AG04450 (cell line): ENCODE measurements at regions of chr9 and their contacts with region 1.

Region 1: GRCh38 chr9:7055201-7055903 is 297.6 kb downstream of the KDM4C start:
- DNase-seq: no peak
- H3K4me3 ChIP-seq: no peak overlapping the region
- H3K27ac ChIP-seq: no peak overlapping the region
- H3K27me3 ChIP-seq: no peaks in the 10 kb centered on the region
- CTCF ChIP-seq: no peak

Region 2: DNA sequence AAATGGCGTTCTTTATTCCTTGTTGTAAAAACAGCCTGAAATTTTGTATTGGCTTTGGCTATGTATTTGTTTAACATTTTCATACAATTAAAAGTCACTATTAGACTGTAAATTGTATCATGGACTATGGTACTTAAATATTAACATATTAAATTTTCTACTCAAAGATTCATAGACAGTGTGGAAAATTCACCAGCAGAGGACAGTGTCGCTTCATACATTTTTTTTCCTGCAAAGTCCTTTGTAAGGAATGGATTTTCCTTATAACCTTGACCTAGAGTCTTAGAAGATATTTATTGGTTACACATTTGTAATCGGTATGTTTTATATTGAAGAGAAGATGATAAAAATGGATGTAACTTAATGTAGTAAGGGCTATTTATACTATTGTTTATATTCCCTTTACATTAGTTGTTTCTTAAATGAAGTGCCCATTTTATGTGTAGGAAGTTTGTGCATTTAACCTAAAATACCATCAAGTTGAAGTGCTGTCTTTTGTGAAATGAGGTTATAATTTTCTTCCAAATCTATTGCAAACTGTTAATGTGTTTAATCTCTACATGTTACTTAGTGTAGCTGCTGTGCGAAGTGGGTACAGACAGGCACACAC is 147.5 kb before region 1 on chr9:
- CTCF ChIA-PET with region 1: interaction called, 45 read pairs
- POLR2A ChIA-PET with region 1: interaction called, 3 read pairs
- DNase-seq: peak; percentile 13
- H3K4me3 ChIP-seq: no peak overlapping the region
- H3K27ac ChIP-seq: no peak overlapping the region
- H3K27me3 ChIP-seq: no peaks in the 10 kb centered on the region
- CTCF ChIP-seq: peak; percentile 90

Region 3: GRCh38 chr9:7067169-7067568 is 11.8 kb after region 1 on chr9:
- CTCF ChIA-PET with region 1: interaction called, 36 read pairs
- POLR2A ChIA-PET with region 1: no interaction called
- DNase-seq: no peak
- H3K4me3 ChIP-seq: no peak overlapping the region
- H3K27ac ChIP-seq: no peak overlapping the region
- H3K27me3 ChIP-seq: no peaks in the 10 kb centered on the region
- CTCF ChIP-seq: no peak

Region 4: DNA sequence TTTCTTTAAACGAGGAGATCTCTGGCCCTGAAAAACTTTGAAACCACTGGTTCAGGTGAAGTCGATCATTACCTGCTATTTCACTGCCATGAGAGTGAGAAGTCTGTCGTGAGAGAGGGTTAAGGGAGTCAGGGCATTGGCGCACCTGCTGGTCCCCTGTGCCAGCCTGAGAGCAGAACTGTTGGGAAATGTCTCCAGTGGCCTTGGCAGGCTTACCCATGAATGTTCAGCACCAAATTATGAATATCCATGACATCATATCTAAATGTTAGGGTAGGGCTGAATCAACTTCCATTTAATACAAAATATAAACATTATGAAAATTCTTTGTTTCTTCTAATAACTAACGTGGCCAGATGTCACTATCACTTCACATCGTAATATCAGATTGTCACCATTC is 81.7 kb after region 1 on chr9:
- CTCF ChIA-PET with region 1: no interaction called
- POLR2A ChIA-PET with region 1: no interaction called
- DNase-seq: no peak
- H3K4me3 ChIP-seq: no peak overlapping the region
- H3K27ac ChIP-seq: no peak overlapping the region
- H3K27me3 ChIP-seq: no peaks in the 10 kb centered on the region
- CTCF ChIP-seq: no peak

Region 5: DNA sequence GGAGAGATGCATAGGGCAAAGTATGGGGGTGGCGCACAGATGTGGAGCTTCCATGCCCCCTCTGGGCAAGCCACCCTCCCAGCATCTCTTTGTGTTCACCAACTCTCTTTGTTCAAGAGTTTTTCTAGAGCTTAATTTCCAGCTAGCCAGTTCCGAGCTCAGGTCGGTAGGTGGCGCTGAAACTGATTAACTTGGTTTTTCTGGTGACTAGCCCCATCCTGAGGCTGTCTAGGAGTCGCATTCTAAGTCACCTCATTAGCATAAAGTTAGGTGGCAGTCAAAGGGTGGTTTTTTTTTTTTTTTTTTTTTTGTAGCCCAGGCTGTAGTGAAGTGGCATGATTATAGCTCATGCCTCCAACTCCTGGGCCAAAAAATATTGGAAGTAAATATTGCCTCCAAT is 178.8 kb after region 1 on chr9:
- CTCF ChIA-PET with region 1: interaction called, 26 read pairs
- POLR2A ChIA-PET with region 1: no interaction called
- DNase-seq: no peak
- H3K4me3 ChIP-seq: no peak overlapping the region
- H3K27ac ChIP-seq: no peak overlapping the region
- H3K27me3 ChIP-seq: no peaks in the 10 kb centered on the region
- CTCF ChIP-seq: peak; percentile 65

Region 6: DNA sequence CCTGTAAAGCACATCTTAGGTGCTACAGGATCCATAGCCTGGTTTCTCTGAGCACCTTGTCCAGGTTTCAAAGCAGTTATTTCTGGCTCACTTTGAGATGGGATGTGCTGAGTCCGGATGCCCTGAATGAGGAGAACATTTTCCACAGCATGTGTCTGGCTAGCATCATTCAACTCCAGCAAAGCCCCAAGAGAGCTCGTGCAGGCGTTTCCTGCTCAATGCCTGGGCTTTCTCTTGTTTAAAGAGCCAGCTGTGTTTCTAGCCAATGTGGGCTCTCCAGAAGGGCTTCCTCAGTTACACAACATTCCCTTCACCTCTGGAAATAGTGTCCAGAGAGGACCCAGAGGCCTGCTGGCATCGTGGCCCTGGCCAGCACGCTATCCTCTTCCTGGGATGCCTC is 332.5 kb after region 1 on chr9:
- CTCF ChIA-PET with region 1: interaction called, 11 read pairs
- POLR2A ChIA-PET with region 1: no interaction called
- DNase-seq: no peak
- H3K4me3 ChIP-seq: no peak overlapping the region
- H3K27ac ChIP-seq: no peak overlapping the region
- H3K27me3 ChIP-seq: no peaks in the 10 kb centered on the region
- CTCF ChIP-seq: no peak